ENCODE measurements at regions of chr15 and their contacts with region 1.

Region 1: GRCh38 chr15:25501828-25502446 is 63.1 kb upstream of the UBE3A start:
- DNase-seq: peak; percentile 58
- H3K4me3 ChIP-seq: no peak overlapping the region
- H3K27ac ChIP-seq: no peak overlapping the region
- H3K4me1 ChIP-seq: no peaks in the 10 kb centered on the region
- CTCF ChIP-seq: peak; percentile 80

Region 2: DNA sequence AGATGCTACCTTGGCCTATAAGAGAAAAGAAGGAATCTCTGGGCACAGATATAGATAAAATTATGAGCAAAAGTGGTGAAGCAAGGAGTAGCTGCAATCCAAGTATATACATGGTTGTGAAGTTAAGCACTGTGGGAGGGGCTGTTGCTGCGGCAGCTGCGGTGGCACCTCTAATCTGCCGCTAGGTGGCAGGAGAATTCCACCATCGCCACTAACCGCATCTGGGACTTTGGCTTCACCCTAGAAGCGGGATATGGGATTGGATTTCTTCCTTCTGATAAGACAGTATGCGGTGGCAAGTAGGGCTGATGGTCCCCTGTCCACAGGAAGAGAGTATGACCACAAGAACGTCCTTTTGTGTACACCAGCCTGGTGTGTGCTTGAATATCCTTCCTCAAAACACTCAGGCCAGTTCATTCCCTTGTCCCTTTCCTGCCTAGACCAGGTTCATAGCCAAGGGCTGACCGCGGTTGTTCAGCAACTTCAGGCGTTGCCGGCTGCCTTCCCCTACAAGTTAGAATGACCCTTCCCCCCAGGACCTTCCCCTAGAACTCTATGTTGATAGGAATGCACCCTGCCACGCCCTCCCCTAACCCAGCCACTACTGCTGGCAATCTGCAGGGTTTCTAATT is 1859.4 kb before region 1 on chr15:
- CTCF ChIA-PET with region 1: no interaction called
- POLR2A ChIA-PET with region 1: no interaction called
- intact Hi-C with region 1: loop called (anchors 5 kb)
- DNase-seq: peak; percentile 56
- H3K4me3 ChIP-seq: no peak overlapping the region
- H3K27ac ChIP-seq: no peak overlapping the region
- H3K4me1 ChIP-seq: no peaks in the 10 kb centered on the region
- CTCF ChIP-seq: peak; percentile 91

Region 3: GRCh38 chr15:25136119-25136518 is 365.8 kb before region 1 on chr15:
- CTCF ChIA-PET with region 1: no interaction called
- POLR2A ChIA-PET with region 1: no interaction called
- intact Hi-C with region 1: loop called (anchors 2 kb)
- DNase-seq: peak; percentile 41
- H3K4me3 ChIP-seq: no peak overlapping the region
- H3K27ac ChIP-seq: no peak overlapping the region
- H3K4me1 ChIP-seq: no peaks in the 10 kb centered on the region
- CTCF ChIP-seq: peak; percentile 71

Measured in OCI-LY7 (cell line).